ENCODE measurements at regions of chr12 and their contacts with region 1.

Region 1: GRCh38 chr12:76083904-76084862 is at the start of gene NAP1L1:
- DNase-seq: peak; percentile 98
- ATAC-seq: peak; percentile 89
- H3K4me3 ChIP-seq: peak within 1 kb of the TSS; percentile 93
- H3K27ac ChIP-seq: peak within 1 kb of the TSS; percentile 76
- H3K4me1 ChIP-seq: peaks cover 31% of the 10 kb centered on the region
- H3K27me3 ChIP-seq: no peaks in the 10 kb centered on the region
- CTCF ChIP-seq: no peak
- total RNA-seq, gene NAP1L1: 200 and 247 TPM in 2 replicates

Region 2: DNA sequence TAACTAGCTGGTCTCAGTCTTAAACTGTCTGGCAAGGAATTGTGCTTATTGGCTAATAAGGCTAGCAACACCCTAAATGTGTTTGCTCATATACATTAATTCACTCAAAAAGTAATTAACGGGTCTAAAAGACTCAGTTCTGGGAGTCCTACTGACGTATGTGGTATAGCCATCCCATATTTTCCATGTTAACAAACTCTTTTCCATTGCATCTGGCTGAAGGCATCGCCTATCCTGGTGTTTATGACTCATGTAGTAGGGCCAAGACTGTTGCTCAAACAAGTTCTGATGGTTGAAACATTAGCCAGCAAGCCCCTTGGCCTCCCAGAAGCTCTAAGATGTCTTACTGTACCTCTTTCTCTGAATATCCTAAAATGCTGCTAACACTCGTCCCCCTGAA is 151.1 kb before region 1 on chr12:
- CTCF ChIA-PET with region 1: no interaction called
- POLR2A ChIA-PET with region 1: no interaction called
- intact Hi-C with region 1: no loop called
- DNase-seq: peak; percentile 42
- ATAC-seq: peak; percentile 33; the same call in 1 of the 2 replicates
- H3K4me3 ChIP-seq: no peak overlapping the region
- H3K27ac ChIP-seq: no peak overlapping the region
- H3K4me1 ChIP-seq: peaks cover 8% of the 10 kb centered on the region
- H3K27me3 ChIP-seq: no peaks in the 10 kb centered on the region
- CTCF ChIP-seq: no peak

Region 3: GRCh38 chr12:76183459-76184186 is 99.4 kb after region 1 on chr12:
- CTCF ChIA-PET with region 1: no interaction called
- POLR2A ChIA-PET with region 1: no interaction called
- intact Hi-C with region 1: loop called (anchors 1 kb)
- DNase-seq: peak; percentile 99
- ATAC-seq: peak; percentile 95
- H3K4me3 ChIP-seq: no peak overlapping the region
- H3K27ac ChIP-seq: peak overlapping the region; percentile 76
- H3K4me1 ChIP-seq: peaks cover 15% of the 10 kb centered on the region
- H3K27me3 ChIP-seq: no peaks in the 10 kb centered on the region
- CTCF ChIP-seq: no peak

Measured in PC-3 (cell line).